HCT116 (cell line): ENCODE measurements at regions of chr2 and their contacts with region 1.

Region 1: DNA sequence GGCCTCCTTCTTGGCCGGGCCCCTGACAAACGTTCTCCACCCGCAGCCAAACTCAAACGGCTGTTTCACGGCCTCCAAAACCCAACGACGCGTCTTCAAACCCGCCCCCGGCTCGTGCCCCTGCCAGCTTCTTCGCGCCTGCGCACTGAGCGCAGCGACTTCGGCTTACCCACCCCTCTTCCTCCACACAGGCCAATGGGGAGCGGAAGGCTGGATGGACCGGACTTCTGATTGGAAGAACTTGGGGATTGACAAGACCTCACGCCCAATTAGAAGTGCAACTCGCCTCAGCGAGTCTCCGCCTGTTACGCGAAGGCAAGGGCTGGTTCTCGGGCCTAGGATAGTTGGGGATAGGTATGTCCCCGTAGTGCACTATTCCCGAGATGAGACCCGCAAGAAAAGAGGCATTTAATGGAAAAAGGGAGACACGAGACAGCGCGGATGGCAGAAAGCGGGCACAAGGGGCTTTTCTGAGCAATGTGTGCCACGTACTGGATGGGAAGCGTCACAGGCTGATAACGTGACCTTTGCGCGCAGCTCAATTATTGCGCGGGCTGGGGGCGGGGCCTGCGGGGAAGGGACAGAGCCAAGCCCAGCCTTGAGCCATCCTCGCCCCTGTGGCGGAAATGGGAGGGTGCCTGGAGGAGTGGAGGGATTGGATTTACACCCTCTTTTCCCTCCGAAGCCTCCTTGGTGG is at the start of gene LAPTM4A:
- DNase-seq: peak; percentile 100
- ATAC-seq: peak; percentile 96
- H3K4me3 ChIP-seq: peak within 1 kb of the TSS; percentile 82 to 85
- H3K27ac ChIP-seq: peak within 1 kb of the TSS; percentile 81
- H3K4me1 ChIP-seq: peaks cover 8 to 22% of the 10 kb centered on the region in 2 experiments
- H3K27me3 ChIP-seq: no peaks in the 10 kb centered on the region
- CTCF ChIP-seq: no peak
- POLR2A ChIP-seq: peak; percentile 59
- RAD21 ChIP-seq: no peak
- total RNA-seq, gene LAPTM4A: 84.5 TPM

Region 2: DNA sequence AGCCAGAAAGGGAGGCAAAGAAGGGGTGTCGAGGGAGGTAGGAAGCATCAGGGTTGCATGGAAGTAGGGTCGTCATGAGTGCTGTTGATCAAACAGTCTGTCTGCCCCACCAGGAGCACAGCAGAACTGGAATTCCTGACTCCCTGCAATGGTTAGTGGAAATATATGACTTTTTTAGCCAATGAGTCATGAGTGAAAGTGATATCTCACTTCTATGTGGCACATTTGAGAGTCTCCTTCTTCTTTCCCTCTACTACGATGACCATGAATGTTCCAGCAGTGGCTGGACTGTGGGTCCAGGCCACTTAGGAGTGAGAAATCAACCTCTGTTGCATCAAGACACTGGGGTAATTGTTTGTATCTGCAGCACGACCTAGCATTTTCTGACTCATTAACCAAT is 349.4 kb before region 1 on chr2:
- CTCF ChIA-PET with region 1: no interaction called
- POLR2A ChIA-PET with region 1: no interaction called
- RAD21 ChIA-PET with region 1: no interaction called
- intact Hi-C with region 1: no loop called
- DNase-seq: no peak
- ATAC-seq: no peak
- H3K4me3 ChIP-seq: no peak overlapping the region
- H3K27ac ChIP-seq: no peak overlapping the region
- H3K4me1 ChIP-seq: no peaks in the 10 kb centered on the region; a peak in 1 of 4 replicates
- H3K27me3 ChIP-seq: no peaks in the 10 kb centered on the region; the same call in 1 of the 2 replicates
- CTCF ChIP-seq: no peak
- POLR2A ChIP-seq: no peak
- RAD21 ChIP-seq: no peak

Region 3: DNA sequence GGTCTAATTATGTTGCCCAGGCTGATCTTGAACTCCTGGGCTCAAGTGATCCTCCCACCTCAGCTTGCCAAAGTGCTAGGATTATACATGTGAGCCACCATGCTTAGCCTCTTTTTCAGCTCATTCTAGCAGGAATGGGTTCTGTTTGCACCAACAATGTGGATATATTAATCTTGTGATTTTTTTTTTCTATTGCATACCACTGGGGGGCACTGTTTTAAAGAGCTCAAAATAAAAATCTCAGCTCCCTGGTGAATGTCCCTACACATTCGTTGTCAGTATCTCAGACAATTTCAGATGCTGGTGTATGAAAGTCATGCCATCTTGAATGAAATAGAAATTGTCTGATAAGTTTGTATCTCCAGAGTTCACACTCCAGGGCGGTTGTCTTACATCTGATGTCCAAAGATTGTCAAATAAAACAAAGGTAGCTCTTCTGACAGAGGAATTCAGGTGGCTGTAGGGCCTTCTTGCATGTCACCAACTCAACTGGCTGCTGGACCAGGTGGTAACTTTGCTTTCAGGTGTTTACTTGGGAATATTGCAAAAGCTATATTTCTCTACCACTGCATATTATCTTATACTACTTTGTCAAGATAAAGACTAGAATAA is 36.1 kb before region 1 on chr2:
- CTCF ChIA-PET with region 1: interaction called, 16 read pairs
- POLR2A ChIA-PET with region 1: interaction called, 5 read pairs
- RAD21 ChIA-PET with region 1: no interaction called
- intact Hi-C with region 1: no loop called
- DNase-seq: peak; percentile 26
- ATAC-seq: peak; percentile 74
- H3K4me3 ChIP-seq: no peak overlapping the region
- H3K27ac ChIP-seq: no peak overlapping the region
- H3K4me1 ChIP-seq: no peaks in the 10 kb centered on the region
- H3K27me3 ChIP-seq: no peaks in the 10 kb centered on the region
- CTCF ChIP-seq: peak; percentile 52 to 83 (median 70)
- POLR2A ChIP-seq: no peak
- RAD21 ChIP-seq: peak; percentile 77

Region 4: DNA sequence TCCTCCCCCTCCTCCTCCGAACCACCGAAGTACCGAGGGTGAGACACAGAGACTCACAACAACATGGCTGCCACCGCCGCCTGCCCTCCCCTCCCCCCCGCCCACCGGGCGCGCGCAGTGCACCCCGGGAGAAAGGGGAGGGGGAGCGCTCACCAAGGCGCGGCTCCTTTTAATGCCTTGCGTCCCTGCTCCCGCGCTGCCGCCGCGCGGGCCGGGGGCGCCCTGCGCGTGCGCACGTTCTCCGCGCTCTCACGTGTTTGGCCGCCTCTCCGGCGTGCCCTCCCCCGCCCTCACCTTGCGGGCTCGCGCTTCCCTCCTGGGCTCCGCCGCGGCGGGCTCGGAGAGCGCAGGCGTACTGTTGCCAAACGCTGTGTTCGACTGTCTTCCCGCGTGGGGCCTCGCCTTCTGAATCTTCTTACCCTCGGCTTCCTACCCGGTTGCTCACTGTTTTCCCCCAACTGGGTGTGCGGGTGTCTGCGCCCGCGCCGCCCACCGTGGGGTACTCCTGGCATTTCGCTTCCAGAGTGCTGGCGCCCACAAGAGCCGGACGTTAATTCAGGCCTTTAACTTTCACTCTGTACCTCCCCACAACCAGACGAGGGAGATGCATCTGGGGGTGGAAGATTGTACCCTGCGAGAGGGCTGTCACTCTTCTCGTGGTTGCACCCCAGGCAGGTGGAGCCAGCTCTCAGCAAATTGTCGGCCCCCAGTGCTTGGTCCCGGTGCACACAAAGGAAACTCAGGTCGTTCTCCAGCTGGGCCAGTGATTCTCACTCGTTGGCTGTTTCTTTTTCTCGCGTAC is 299.3 kb after region 1 on chr2 and contains the start of gene PUM2:
- CTCF ChIA-PET with region 1: no interaction called
- POLR2A ChIA-PET with region 1: no interaction called
- RAD21 ChIA-PET with region 1: no interaction called
- intact Hi-C with region 1: loop called (anchors 2 kb)
- DNase-seq: peak; percentile 93
- ATAC-seq: peak; percentile 89
- H3K4me3 ChIP-seq: peak within 1 kb of the TSS; percentile 83 to 95
- H3K27ac ChIP-seq: peak within 1 kb of the TSS; percentile 92
- H3K4me1 ChIP-seq: peaks cover 14 to 35% of the 10 kb centered on the region in 2 experiments
- H3K27me3 ChIP-seq: no peaks in the 10 kb centered on the region
- CTCF ChIP-seq: no peak
- POLR2A ChIP-seq: peak; percentile 89
- RAD21 ChIP-seq: no peak
- total RNA-seq, gene PUM2: 105 TPM

Region 5: DNA sequence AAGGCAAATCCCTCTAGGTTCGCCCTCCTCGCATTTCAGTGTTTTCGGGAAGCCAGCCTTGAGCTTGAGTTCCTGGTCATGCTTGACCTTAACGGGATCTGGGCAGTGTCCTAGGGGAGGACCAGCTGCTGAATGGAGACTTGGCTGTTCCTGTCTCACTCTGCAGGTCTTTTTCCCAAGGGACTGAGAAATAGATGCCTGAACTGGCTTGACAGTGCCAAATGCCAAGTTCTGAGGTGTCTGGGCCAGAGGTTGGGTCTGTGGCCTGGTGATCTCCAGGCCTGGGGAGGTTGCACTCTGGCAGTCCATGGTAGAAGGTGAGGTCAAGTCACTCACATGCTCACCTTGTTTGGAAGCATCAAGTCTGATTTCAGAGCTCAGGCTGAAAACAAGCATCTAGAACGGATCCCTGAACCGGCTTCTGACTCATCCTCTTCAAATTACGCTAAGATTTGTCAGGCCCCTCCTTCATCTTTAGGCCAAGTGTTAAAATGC is 414.8 kb after region 1 on chr2:
- CTCF ChIA-PET with region 1: no interaction called
- POLR2A ChIA-PET with region 1: no interaction called
- RAD21 ChIA-PET with region 1: no interaction called
- intact Hi-C with region 1: no loop called
- DNase-seq: no peak
- ATAC-seq: 0 out of 2 replicates have a peak, but pooled peaks have one; percentile 30
- H3K4me3 ChIP-seq: no peak overlapping the region
- H3K27ac ChIP-seq: no peak overlapping the region
- H3K4me1 ChIP-seq: peaks cover 6 to 15% of the 10 kb centered on the region in 2 experiments; a peak in 3 of 4 replicates
- H3K27me3 ChIP-seq: no peaks in the 10 kb centered on the region
- CTCF ChIP-seq: no peak
- POLR2A ChIP-seq: no peak
- RAD21 ChIP-seq: no peak